ENCODE measurements at regions of chr2 and their contacts with region 1.

Region 1: DNA sequence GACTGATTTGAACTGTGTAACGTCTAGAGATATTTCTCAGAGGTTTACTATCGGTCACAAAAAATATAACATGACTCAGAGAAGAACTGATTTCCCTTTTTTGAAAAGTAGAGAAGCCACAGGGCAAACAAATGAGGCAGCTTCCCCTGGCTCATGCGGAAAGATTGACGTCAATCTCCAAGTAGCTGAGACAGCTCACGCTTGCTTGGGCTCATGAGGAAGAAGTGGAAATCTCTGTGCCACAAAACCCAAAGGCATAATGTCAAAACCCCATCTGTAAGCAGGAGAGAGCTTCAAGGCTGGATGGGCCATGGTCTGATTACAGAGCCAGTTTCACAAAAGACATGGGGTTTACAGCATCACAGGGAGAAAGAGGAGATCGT is 188.1 kb downstream of the ARL4C start:
- DNase-seq: peak; percentile 89
- H3K4me3 Mint-ChIP-seq: peak overlapping the region; percentile 53
- H3K27ac Mint-ChIP-seq: peak overlapping the region; percentile 99
- H3K4me1 Mint-ChIP-seq: peaks cover 50% of the 10 kb centered on the region
- H3K27me3 Mint-ChIP-seq: no peaks in the 10 kb centered on the region

Region 2: DNA sequence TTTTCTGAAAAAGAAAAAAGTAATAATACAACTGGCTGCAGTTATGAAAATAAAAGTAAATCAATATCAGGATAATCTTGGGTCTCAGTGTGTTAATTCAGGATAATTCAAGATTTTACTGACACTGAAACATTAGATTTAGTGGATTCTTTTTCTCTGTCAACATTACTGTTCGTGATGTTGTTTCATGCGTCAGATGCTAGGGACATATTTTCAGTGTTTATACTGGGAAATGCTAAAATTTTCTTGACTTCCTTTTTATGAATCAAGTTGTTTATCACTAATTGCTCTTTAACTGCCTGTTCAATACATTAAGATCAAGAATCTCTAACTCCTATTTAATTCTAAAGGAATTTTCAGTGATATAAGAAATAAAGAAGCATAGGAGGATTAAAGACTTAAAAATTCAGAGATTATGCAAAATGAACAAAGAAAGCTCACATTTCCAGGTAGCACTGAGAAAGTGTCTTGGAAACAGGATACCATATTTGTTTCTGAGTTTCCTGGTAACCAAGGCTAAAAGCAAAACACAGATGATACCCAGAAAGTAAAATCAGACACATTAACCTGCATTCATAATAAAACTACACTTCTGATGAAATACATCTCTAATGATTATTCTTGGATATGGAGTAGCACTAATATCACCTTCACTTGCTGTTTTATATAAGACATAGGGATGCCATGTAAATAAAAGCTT is 14.1 kb after region 1 on chr2:
- CTCF ChIA-PET with region 1: no interaction called
- intact Hi-C with region 1: loop called (anchors 1 kb)
- DNase-seq: no peak
- H3K4me3 Mint-ChIP-seq: no peak overlapping the region
- H3K27ac Mint-ChIP-seq: peak overlapping the region; percentile 69
- H3K4me1 Mint-ChIP-seq: peaks cover 42% of the 10 kb centered on the region
- H3K27me3 Mint-ChIP-seq: no peaks in the 10 kb centered on the region

Region 3: GRCh38 chr2:234368861-234369261 is 60.1 kb after region 1 on chr2:
- CTCF ChIA-PET with region 1: interaction called, 5 read pairs
- intact Hi-C with region 1: loop called (anchors 1 kb)
- DNase-seq: peak; percentile 58
- H3K4me3 Mint-ChIP-seq: no peak overlapping the region
- H3K27ac Mint-ChIP-seq: peak overlapping the region; percentile 74
- H3K4me1 Mint-ChIP-seq: peaks cover 73% of the 10 kb centered on the region
- H3K27me3 Mint-ChIP-seq: no peaks in the 10 kb centered on the region

Region 4: GRCh38 chr2:234474654-234475053 is 165.8 kb after region 1 on chr2:
- CTCF ChIA-PET with region 1: no interaction called
- intact Hi-C with region 1: loop called (anchors 1 kb)
- DNase-seq: no peak
- H3K4me3 Mint-ChIP-seq: no peak overlapping the region
- H3K27ac Mint-ChIP-seq: peak overlapping the region; percentile 83
- H3K4me1 Mint-ChIP-seq: peaks cover 45% of the 10 kb centered on the region
- H3K27me3 Mint-ChIP-seq: no peaks in the 10 kb centered on the region

Region 5: DNA sequence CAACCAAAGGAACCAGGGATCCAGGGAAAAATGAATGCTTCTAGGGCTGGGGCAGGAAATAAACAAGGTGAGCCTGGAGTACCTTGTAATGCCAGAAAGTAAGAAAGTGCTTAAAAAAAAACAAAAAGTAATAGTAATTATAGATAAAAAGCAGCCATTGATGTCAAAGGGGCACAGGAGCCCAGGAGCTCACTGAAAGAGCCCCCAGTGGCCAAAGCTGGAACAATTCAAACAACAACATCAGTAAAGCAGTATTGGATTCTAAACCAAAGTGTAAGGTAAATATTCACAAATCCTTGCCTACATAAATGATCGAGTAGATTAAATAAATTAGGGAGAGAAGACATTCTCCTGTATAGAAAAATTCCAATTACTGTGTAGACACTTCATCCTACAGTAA is 302.4 kb after region 1 on chr2:
- CTCF ChIA-PET with region 1: no interaction called
- intact Hi-C with region 1: no loop called
- DNase-seq: no peak
- H3K4me3 Mint-ChIP-seq: no peak overlapping the region
- H3K27ac Mint-ChIP-seq: no peak overlapping the region
- H3K4me1 Mint-ChIP-seq: no peaks in the 10 kb centered on the region
- H3K27me3 Mint-ChIP-seq: peaks cover 9% of the 10 kb centered on the region